Thyroid gland (tissue), 4 donors: ENCODE measurements at regions of chr6 and their contacts with region 1.

Region 1: GRCh38 chr6:21593412-21593926 is at the start of gene SOX4:
- DNase-seq: peak; percentile 95 to 96
- H3K4me3 ChIP-seq: peak within 1 kb of the TSS; percentile 24 to 83 (median 62)
- H3K27ac ChIP-seq: peak within 1 kb of the TSS; percentile 94 to 97 (median 96)
- H3K4me1 ChIP-seq: peaks cover 0 to 8% of the 10 kb centered on the region in 2 donors
- H3K27me3 ChIP-seq: no peaks in the 10 kb centered on the region
- CTCF ChIP-seq: peak in 1 of 6 experiments; percentile 5
- POLR2A ChIP-seq: peak; percentile 93 to 97
- total RNA-seq, gene SOX4: 10.8 to 20.7 (median 14.7) TPM

Region 2: DNA sequence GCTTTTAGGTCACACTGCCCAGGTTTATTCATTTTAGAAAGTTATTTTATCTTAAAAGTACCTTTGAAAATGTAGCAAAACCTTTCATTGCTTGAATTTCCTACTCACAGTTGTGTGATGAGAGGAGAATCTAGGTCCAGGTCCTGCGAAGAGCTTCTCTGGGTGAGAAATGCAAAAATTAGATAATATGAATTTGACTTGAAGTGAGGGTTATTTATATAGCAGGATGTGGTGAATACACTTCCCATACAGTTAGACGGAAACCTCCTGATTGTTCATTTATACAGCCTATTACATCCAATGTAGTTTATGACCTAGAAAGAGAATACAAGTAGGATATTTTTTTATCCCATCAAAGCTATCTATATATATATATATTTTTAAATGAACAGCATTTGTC is 1028.7 kb before region 1 on chr6:
- intact Hi-C with region 1: loop called (anchors 5 kb)
- DNase-seq: no peak
- H3K4me3 ChIP-seq: no peak overlapping the region
- H3K27ac ChIP-seq: no peak overlapping the region
- H3K4me1 ChIP-seq: no peaks in the 10 kb centered on the region
- H3K27me3 ChIP-seq: no peaks in the 10 kb centered on the region
- CTCF ChIP-seq: no peak
- POLR2A ChIP-seq: no peak

Region 3: DNA sequence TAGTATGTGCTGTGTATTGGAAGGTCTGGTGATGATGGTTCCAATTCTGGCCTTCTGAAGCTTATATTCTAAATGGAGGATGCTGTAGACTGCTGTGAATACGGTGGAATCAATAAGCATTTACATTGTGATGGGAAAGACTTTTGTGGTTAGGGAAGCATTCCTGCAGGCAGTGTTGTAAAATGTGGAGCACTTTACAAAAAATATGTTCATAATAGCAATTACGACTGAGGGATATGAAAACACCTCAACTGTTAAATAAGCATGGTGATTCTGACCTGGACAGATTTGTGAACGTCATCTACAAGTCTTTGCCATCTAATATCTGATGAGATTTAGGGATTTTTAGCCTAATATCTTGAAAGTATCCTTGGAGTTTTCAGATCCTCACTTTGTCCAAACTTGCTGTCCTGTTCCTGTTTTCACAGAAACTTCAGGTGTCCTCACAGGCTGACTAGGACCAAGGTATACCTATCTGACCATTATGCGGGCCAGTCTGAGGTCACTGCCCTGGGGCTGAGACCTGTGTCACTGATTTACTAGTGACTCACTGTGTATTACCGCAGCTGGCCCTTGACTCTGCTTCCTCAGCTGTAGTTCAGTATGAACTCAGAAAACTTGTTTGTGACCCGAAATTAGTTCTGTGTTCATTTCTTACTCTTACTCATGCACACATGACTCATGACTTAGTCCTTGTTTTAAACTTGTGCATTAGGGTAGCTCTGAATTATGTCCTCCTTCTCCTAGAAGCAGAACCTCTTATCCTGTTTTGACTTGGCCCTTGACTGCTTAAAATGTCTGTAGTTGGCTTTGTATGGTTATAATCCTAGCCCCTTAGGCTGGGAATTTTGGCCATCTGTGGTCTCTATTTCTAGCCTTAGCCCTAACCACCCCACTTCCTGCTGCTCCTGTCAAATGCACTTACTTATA is 716.2 kb before region 1 on chr6:
- intact Hi-C with region 1: loop called (anchors 10 kb)
- DNase-seq: peak in 1 of 2 donors; percentile 5
- H3K4me3 ChIP-seq: no peak overlapping the region
- H3K27ac ChIP-seq: no peak overlapping the region
- H3K4me1 ChIP-seq: peaks cover 0 to 6% of the 10 kb centered on the region in 2 donors
- H3K27me3 ChIP-seq: no peaks in the 10 kb centered on the region
- CTCF ChIP-seq: no peak
- POLR2A ChIP-seq: no peak

Region 4: GRCh38 chr6:21348504-21349195 is 244.8 kb before region 1 on chr6:
- intact Hi-C with region 1: loop called (anchors 10 kb)
- DNase-seq: peak; percentile 91
- H3K4me3 ChIP-seq: no peak overlapping the region
- H3K27ac ChIP-seq: no peak overlapping the region
- H3K4me1 ChIP-seq: peaks cover 19 to 20% of the 10 kb centered on the region in 2 donors
- H3K27me3 ChIP-seq: no peaks in the 10 kb centered on the region
- CTCF ChIP-seq: no peak
- POLR2A ChIP-seq: no peak

Region 5: DNA sequence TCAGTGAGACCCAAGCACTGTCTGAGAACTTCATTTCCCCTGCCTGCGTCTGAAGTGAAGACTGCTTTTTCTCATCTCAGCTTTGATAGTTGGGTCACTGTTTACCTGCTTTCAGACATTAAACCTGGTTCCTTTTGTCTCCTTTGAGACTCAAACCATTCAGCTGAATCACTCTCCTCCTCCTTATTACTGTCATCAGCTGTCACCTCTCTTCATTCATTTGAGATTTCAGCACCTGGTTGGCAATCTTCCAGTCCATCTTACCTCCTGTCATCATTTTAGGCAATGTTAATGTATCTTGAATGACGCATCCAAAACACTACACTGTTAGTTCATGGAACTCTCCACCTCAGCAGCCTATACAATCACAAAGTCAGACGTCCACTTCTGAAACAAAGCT is 34.2 kb before region 1 on chr6:
- intact Hi-C with region 1: no loop called
- DNase-seq: no peak
- H3K4me3 ChIP-seq: no peak overlapping the region
- H3K27ac ChIP-seq: no peak overlapping the region
- H3K4me1 ChIP-seq: no peaks in the 10 kb centered on the region
- H3K27me3 ChIP-seq: no peaks in the 10 kb centered on the region
- CTCF ChIP-seq: no peak
- POLR2A ChIP-seq: no peak

Region 6: DNA sequence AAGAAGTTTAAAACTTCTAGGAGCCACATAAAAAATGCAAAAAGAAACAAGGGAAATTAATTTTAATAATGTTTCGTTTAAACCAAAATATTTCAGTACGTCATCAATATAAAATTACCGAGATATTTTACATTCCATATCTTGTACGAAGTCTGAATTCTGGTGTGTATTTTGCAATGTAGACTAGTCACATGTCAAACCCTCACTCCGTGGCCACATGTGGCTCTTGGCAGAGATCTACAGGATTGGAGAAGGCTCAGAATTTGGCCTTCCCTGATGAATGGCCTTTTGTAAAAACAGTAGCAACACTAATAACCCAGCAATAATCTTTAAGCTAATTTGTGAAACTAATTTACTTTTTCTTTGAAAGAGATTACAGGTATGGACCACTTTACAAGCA is 486.3 kb after region 1 on chr6:
- intact Hi-C with region 1: no loop called
- DNase-seq: no peak
- H3K4me3 ChIP-seq: no peak overlapping the region
- H3K27ac ChIP-seq: no peak overlapping the region
- H3K4me1 ChIP-seq: no peaks in the 10 kb centered on the region
- H3K27me3 ChIP-seq: no peaks in the 10 kb centered on the region
- CTCF ChIP-seq: no peak
- POLR2A ChIP-seq: no peak

Region 7: GRCh38 chr6:22145823-22146677 is 552.6 kb after region 1 on chr6:
- intact Hi-C with region 1: loop called (anchors 10 kb)
- DNase-seq: peak in 1 of 2 donors; percentile 6
- H3K4me3 ChIP-seq: no peak overlapping the region
- H3K27ac ChIP-seq: no peak overlapping the region
- H3K4me1 ChIP-seq: peaks cover 29 to 52% of the 10 kb centered on the region in 2 donors
- H3K27me3 ChIP-seq: no peaks in the 10 kb centered on the region
- CTCF ChIP-seq: peak in 4 of 6 experiments; percentile 8 to 34 (median 30)
- POLR2A ChIP-seq: no peak